GM12878 (cell line): ENCODE measurements at regions of chr4 and their contacts with region 1.

Region 1: DNA sequence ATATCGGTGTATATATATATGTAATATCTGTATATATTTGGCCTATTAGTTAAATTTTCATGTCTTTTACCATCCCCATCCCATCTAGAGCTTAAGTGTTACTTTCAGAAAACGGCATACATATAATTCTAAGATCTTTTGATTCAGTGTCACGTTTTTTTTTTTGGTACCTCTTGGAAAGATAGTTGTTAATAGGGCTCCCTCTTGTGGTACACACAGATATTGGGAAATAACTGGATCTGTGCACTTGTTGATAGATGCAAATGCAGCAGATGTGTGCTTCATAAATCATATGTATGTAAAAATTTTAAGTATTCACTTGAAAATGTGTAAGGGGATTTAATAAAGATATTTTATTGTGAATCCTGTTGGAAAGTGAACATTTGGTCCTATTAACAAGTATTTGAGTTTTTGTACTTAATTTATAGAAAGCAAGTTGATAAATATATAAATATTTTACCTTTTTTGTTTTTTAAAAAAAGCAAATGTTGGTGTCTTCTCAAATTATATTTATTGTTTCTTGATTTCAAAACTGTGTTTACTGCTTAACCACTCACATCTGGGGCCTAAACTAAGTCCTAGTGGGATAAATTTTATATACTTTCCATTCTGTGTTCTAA is 74.7 kb downstream of the PAQR3 start:
- DNase-seq: peak; percentile 44
- ATAC-seq: peak; percentile 80
- H3K4me3 ChIP-seq: no peak overlapping the region
- H3K27ac ChIP-seq: no peak overlapping the region
- H3K4me1 ChIP-seq: peaks cover 7% of the 10 kb centered on the region
- H3K27me3 ChIP-seq: no peaks in the 10 kb centered on the region
- CTCF ChIP-seq: peak; percentile 60 to 77 (median 60); a peak in 5 of 6 replicates
- EP300 ChIP-seq: no peak
- POLR2A ChIP-seq: no peak
- RAD21 ChIP-seq: peak; percentile 96

Region 2: GRCh38 chr4:78056265-78057129 is 808.0 kb before region 1 on chr4:
- CTCF ChIA-PET with region 1: interaction called, 16 read pairs
- POLR2A ChIA-PET with region 1: no interaction called
- RAD21 ChIA-PET with region 1: interaction called, 8 read pairs
- SMC1A ChIA-PET with region 1: interaction called, 10 read pairs
- in situ Hi-C with region 1: no loop called
- intact Hi-C with region 1: loop called (anchors 5 kb)
- DNase-seq: no peak
- ATAC-seq: peak; percentile 82
- H3K4me3 ChIP-seq: peak overlapping the region; percentile 63
- H3K27ac ChIP-seq: no peak overlapping the region
- H3K4me1 ChIP-seq: peaks cover 12% of the 10 kb centered on the region; the same call in 1 of the 2 replicates
- H3K27me3 ChIP-seq: peaks cover 0 to 35% of the 10 kb centered on the region in 2 experiments; a peak in 3 of 4 replicates
- CTCF ChIP-seq: no peak
- EP300 ChIP-seq: no peak
- POLR2A ChIP-seq: no peak
- RAD21 ChIP-seq: no peak

Region 3: GRCh38 chr4:78592104-78592783 is 272.3 kb before region 1 on chr4:
- CTCF ChIA-PET with region 1: interaction called, 9 read pairs
- POLR2A ChIA-PET with region 1: no interaction called
- RAD21 ChIA-PET with region 1: interaction called, 17 read pairs
- SMC1A ChIA-PET with region 1: interaction called, 28 read pairs
- in situ Hi-C with region 1: no loop called
- intact Hi-C with region 1: no loop called
- DNase-seq: no peak
- ATAC-seq: peak; percentile 70
- H3K4me3 ChIP-seq: no peak overlapping the region
- H3K27ac ChIP-seq: no peak overlapping the region
- H3K4me1 ChIP-seq: no peaks in the 10 kb centered on the region
- H3K27me3 ChIP-seq: no peaks in the 10 kb centered on the region
- CTCF ChIP-seq: peak; percentile 34 to 61 (median 55)
- EP300 ChIP-seq: peak in 1 of 2 experiments; percentile 77; a peak in 2 of 4 replicates
- POLR2A ChIP-seq: no peak
- RAD21 ChIP-seq: no peak; the same call in 1 of the 2 replicates

Region 4: GRCh38 chr4:78629991-78630541 is 234.4 kb before region 1 on chr4:
- CTCF ChIA-PET with region 1: interaction called, 6 read pairs
- POLR2A ChIA-PET with region 1: interaction called, 5 read pairs
- RAD21 ChIA-PET with region 1: interaction called, 15 read pairs
- SMC1A ChIA-PET with region 1: interaction called, 43 read pairs
- in situ Hi-C with region 1: no loop called
- intact Hi-C with region 1: no loop called
- DNase-seq: no peak
- ATAC-seq: peak; percentile 27
- H3K4me3 ChIP-seq: no peak overlapping the region
- H3K27ac ChIP-seq: no peak overlapping the region
- H3K4me1 ChIP-seq: peaks cover 39% of the 10 kb centered on the region
- H3K27me3 ChIP-seq: no peaks in the 10 kb centered on the region
- CTCF ChIP-seq: no peak
- EP300 ChIP-seq: no peak
- POLR2A ChIP-seq: no peak
- RAD21 ChIP-seq: no peak

Region 5: DNA sequence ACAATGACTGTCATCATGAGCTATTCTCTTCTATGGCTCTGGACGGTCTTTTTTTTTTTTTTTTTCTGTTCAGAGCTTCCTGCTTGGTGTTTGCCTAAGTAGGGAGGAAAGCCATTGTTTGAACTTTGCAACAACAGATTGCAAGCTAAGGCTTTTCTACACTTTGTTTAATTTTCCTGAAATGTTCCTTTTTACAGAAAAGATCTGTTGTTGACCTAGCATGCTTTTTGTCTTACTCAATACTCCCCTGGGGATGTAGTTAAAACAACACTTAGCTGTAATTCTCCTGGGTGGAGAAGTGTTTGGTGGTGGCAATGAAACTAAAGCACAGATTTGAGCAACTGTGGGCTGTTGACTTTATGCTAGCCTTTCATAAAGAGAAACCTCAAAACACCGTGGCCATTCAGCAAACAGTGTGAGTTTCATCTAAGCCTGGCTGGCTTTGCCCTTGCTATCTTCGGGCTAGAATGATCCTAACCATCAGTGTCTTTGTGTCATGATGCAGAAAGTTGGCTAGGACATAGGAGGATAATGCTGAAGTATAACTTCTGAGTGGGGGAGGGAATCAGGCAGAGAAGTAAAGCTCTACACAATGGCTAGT is 202.5 kb before region 1 on chr4:
- CTCF ChIA-PET with region 1: interaction called, 11 read pairs
- POLR2A ChIA-PET with region 1: no interaction called
- RAD21 ChIA-PET with region 1: interaction called, 15 read pairs
- SMC1A ChIA-PET with region 1: interaction called, 10 read pairs
- in situ Hi-C with region 1: no loop called
- intact Hi-C with region 1: loop called (anchors 5 kb)
- DNase-seq: peak; percentile 77
- ATAC-seq: peak; percentile 90
- H3K4me3 ChIP-seq: no peak overlapping the region
- H3K27ac ChIP-seq: no peak overlapping the region
- H3K4me1 ChIP-seq: peaks cover 33% of the 10 kb centered on the region
- H3K27me3 ChIP-seq: peaks cover 0 to 1% of the 10 kb centered on the region in 2 experiments; a peak in 1 of 4 replicates
- CTCF ChIP-seq: no peak
- EP300 ChIP-seq: peak in 1 of 2 experiments; percentile 64; a peak in 1 of 4 replicates
- POLR2A ChIP-seq: no peak
- RAD21 ChIP-seq: no peak

Region 6: DNA sequence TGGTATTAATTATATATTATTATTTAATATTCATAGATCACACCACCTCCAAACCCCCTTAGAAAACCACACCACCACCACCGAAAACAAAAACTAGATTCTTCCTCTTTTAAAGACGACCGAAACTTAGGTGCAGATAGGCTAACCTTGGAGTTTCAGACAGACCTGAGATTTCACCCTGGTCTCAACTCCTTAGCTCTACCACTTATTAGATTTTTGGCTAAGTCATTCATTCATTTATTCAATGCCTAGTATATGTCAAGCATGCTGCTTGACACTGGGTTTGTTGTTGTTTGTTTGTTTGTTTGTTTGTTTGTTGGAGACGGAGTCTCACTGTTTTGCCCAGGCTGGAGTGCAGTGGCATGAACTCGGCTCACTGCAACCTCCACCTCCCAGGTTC is 97.9 kb before region 1 on chr4:
- CTCF ChIA-PET with region 1: interaction called, 7 read pairs
- POLR2A ChIA-PET with region 1: interaction called, 10 read pairs
- RAD21 ChIA-PET with region 1: interaction called, 4 read pairs
- SMC1A ChIA-PET with region 1: interaction called, 9 read pairs
- in situ Hi-C with region 1: no loop called
- intact Hi-C with region 1: no loop called
- DNase-seq: no peak
- ATAC-seq: peak; percentile 92
- H3K4me3 ChIP-seq: peak overlapping the region; percentile 14; the same call in 1 of the 2 replicates
- H3K27ac ChIP-seq: no peak overlapping the region
- H3K4me1 ChIP-seq: peaks cover 27% of the 10 kb centered on the region
- H3K27me3 ChIP-seq: no peaks in the 10 kb centered on the region
- CTCF ChIP-seq: no peak
- EP300 ChIP-seq: no peak
- POLR2A ChIP-seq: no peak
- RAD21 ChIP-seq: no peak

Region 7: GRCh38 chr4:78845472-78845871 is 19.0 kb before region 1 on chr4:
- CTCF ChIA-PET with region 1: interaction called, 12 read pairs
- POLR2A ChIA-PET with region 1: no interaction called
- RAD21 ChIA-PET with region 1: interaction called, 38 read pairs
- SMC1A ChIA-PET with region 1: interaction called, 46 read pairs
- in situ Hi-C with region 1: no loop called
- intact Hi-C with region 1: no loop called
- DNase-seq: peak; percentile 5
- ATAC-seq: peak; percentile 92
- H3K4me3 ChIP-seq: no peak overlapping the region; the same call in 1 of the 2 replicates
- H3K27ac ChIP-seq: no peak overlapping the region
- H3K4me1 ChIP-seq: no peaks in the 10 kb centered on the region; the same call in 1 of the 2 replicates
- H3K27me3 ChIP-seq: no peaks in the 10 kb centered on the region
- CTCF ChIP-seq: no peak
- EP300 ChIP-seq: no peak
- POLR2A ChIP-seq: no peak
- RAD21 ChIP-seq: no peak